ENCODE measurements at regions of chr10 and their contacts with region 1.

Region 1: GRCh38 chr10:125982260-125982948 is 86.0 kb downstream of the FANK1 start:
- DNase-seq: peak in 1 of 2 donors; percentile 71
- ATAC-seq: peak; percentile 66 to 89 (median 87)
- H3K4me3 ChIP-seq: no peak overlapping the region
- H3K4me3 Mint-ChIP-seq: no peak overlapping the region
- H3K27ac ChIP-seq: no peak overlapping the region
- H3K27ac Mint-ChIP-seq: peak overlapping the region; percentile 21 to 75
- H3K4me1 ChIP-seq: peaks cover 5% of the 10 kb centered on the region
- H3K4me1 Mint-ChIP-seq: peaks cover 33 to 43% of the 10 kb centered on the region in 2 donors
- H3K27me3 ChIP-seq: no peaks in the 10 kb centered on the region
- H3K27me3 Mint-ChIP-seq: peaks cover 3 to 14% of the 10 kb centered on the region in 2 donors
- CTCF ChIP-seq: peak; percentile 90

Region 2: GRCh38 chr10:126013489-126014281 is 31.3 kb after region 1 on chr10:
- intact Hi-C with region 1: loop called (anchors 1 kb)
- DNase-seq: peak; percentile 19 to 30
- ATAC-seq: peak in 2 of 3 donors; percentile 22 to 38
- H3K4me3 ChIP-seq: no peak overlapping the region
- H3K4me3 Mint-ChIP-seq: peak overlapping the region; percentile 33
- H3K27ac ChIP-seq: no peak overlapping the region
- H3K27ac Mint-ChIP-seq: peak overlapping the region; percentile 86 to 99
- H3K4me1 ChIP-seq: peaks cover 20% of the 10 kb centered on the region
- H3K4me1 Mint-ChIP-seq: peaks cover 32 to 61% of the 10 kb centered on the region in 2 donors
- H3K27me3 ChIP-seq: no peaks in the 10 kb centered on the region
- H3K27me3 Mint-ChIP-seq: no peaks in the 10 kb centered on the region
- CTCF ChIP-seq: peak; percentile 18

Region 3: GRCh38 chr10:126041781-126042231 is 59.4 kb after region 1 on chr10:
- intact Hi-C with region 1: loop called (anchors 2 kb)
- DNase-seq: peak; percentile 85 to 88
- ATAC-seq: peak; percentile 83 to 95 (median 92)
- H3K4me3 ChIP-seq: peak overlapping the region; percentile 23
- H3K4me3 Mint-ChIP-seq: peak overlapping the region; percentile 73
- H3K27ac ChIP-seq: peak overlapping the region; percentile 97
- H3K27ac Mint-ChIP-seq: peak overlapping the region; percentile 98 to 99
- H3K4me1 ChIP-seq: peaks cover 27% of the 10 kb centered on the region
- H3K4me1 Mint-ChIP-seq: peaks cover 20 to 28% of the 10 kb centered on the region in 2 donors
- H3K27me3 ChIP-seq: no peaks in the 10 kb centered on the region
- H3K27me3 Mint-ChIP-seq: no peaks in the 10 kb centered on the region
- CTCF ChIP-seq: no peak

Region 4: GRCh38 chr10:126097558-126098225 is 115.3 kb after region 1 on chr10:
- intact Hi-C with region 1: loop called (anchors 1 kb)
- DNase-seq: peak in 1 of 2 donors; percentile 15
- ATAC-seq: peak in 2 of 3 donors; percentile 46 to 61
- H3K4me3 ChIP-seq: no peak overlapping the region
- H3K4me3 Mint-ChIP-seq: no peak overlapping the region
- H3K27ac ChIP-seq: no peak overlapping the region
- H3K27ac Mint-ChIP-seq: no peak overlapping the region
- H3K4me1 ChIP-seq: no peaks in the 10 kb centered on the region
- H3K4me1 Mint-ChIP-seq: no peaks in the 10 kb centered on the region
- H3K27me3 ChIP-seq: peaks cover 2% of the 10 kb centered on the region
- H3K27me3 Mint-ChIP-seq: no peaks in the 10 kb centered on the region
- CTCF ChIP-seq: peak; percentile 43

Region 5: GRCh38 chr10:126171553-126171952 is 189.1 kb after region 1 on chr10:
- intact Hi-C with region 1: no loop called
- DNase-seq: no peak
- ATAC-seq: no peak
- H3K4me3 ChIP-seq: no peak overlapping the region
- H3K4me3 Mint-ChIP-seq: no peak overlapping the region
- H3K27ac ChIP-seq: no peak overlapping the region
- H3K27ac Mint-ChIP-seq: no peak overlapping the region
- H3K4me1 ChIP-seq: no peaks in the 10 kb centered on the region
- H3K4me1 Mint-ChIP-seq: no peaks in the 10 kb centered on the region
- H3K27me3 ChIP-seq: no peaks in the 10 kb centered on the region
- H3K27me3 Mint-ChIP-seq: peaks cover 6% of the 10 kb centered on the region in 2 donors
- CTCF ChIP-seq: no peak

Region 6: DNA sequence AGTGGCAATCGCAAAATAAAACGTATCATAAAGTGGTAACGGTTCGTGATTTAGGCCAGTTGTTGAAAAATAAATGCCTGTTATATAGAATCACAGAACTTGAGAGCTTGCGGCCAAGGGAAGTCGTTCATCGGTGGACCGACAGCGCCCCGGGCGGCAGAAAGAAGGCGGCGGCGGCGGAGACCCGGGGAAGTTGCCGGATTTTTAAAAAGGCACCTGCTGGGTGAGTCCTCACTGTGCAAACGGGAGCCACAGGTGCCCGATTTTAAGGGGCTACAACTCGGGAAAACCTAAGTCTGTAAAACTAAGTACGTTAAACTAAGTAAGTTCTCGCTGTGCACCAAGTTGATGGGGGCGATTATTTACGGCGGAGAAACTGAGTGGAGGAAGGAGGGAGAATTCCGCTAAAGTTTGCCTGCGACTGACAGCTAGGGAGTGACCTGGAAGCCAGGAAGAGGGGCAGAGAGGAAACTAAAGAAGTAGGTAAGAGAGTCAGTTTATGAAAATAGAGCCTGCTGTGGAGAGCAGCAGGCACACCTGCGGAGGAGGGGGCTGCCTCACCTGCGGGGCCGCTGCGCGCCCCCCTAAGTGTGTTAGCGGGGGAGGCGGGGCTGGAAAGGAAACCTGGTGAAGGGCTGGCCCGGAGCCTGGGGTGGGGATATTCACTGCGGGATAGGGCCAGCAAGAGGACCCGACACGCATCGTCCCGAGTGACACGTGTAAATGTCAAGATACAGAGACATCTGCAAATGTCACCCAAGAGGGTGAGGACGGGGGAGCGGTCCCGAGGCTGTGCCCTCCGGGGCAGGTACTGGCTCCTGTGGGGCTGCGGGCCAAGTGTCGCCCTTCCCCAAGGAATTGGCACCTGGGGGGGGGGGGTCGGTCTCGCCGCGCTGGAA is 404.9 kb after region 1 on chr10:
- intact Hi-C with region 1: loop called (anchors 10 kb)
- DNase-seq: peak in 1 of 2 donors; percentile 41
- ATAC-seq: peak in 1 of 3 donors; percentile 45
- H3K4me3 ChIP-seq: peak overlapping the region; percentile 12
- H3K4me3 Mint-ChIP-seq: peak overlapping the region; percentile 84
- H3K27ac ChIP-seq: no peak overlapping the region
- H3K27ac Mint-ChIP-seq: no peak overlapping the region
- H3K4me1 ChIP-seq: peaks cover 7% of the 10 kb centered on the region
- H3K4me1 Mint-ChIP-seq: peaks cover 7 to 9% of the 10 kb centered on the region in 2 donors
- H3K27me3 ChIP-seq: peaks cover 9% of the 10 kb centered on the region
- H3K27me3 Mint-ChIP-seq: peaks cover 50 to 72% of the 10 kb centered on the region in 2 donors
- CTCF ChIP-seq: peak; percentile 40

Region 7: GRCh38 chr10:126504063-126504739 is 521.8 kb after region 1 on chr10:
- intact Hi-C with region 1: loop called (anchors 2 kb)
- DNase-seq: peak in 1 of 2 donors; percentile 45
- ATAC-seq: peak in 1 of 3 donors; percentile 58
- H3K4me3 ChIP-seq: no peak overlapping the region
- H3K4me3 Mint-ChIP-seq: no peak overlapping the region
- H3K27ac ChIP-seq: no peak overlapping the region
- H3K27ac Mint-ChIP-seq: no peak overlapping the region
- H3K4me1 ChIP-seq: no peaks in the 10 kb centered on the region
- H3K4me1 Mint-ChIP-seq: peaks cover 0 to 5% of the 10 kb centered on the region in 2 donors
- H3K27me3 ChIP-seq: no peaks in the 10 kb centered on the region
- H3K27me3 Mint-ChIP-seq: peaks cover 4 to 6% of the 10 kb centered on the region in 2 donors
- CTCF ChIP-seq: peak; percentile 50

Region 8: DNA sequence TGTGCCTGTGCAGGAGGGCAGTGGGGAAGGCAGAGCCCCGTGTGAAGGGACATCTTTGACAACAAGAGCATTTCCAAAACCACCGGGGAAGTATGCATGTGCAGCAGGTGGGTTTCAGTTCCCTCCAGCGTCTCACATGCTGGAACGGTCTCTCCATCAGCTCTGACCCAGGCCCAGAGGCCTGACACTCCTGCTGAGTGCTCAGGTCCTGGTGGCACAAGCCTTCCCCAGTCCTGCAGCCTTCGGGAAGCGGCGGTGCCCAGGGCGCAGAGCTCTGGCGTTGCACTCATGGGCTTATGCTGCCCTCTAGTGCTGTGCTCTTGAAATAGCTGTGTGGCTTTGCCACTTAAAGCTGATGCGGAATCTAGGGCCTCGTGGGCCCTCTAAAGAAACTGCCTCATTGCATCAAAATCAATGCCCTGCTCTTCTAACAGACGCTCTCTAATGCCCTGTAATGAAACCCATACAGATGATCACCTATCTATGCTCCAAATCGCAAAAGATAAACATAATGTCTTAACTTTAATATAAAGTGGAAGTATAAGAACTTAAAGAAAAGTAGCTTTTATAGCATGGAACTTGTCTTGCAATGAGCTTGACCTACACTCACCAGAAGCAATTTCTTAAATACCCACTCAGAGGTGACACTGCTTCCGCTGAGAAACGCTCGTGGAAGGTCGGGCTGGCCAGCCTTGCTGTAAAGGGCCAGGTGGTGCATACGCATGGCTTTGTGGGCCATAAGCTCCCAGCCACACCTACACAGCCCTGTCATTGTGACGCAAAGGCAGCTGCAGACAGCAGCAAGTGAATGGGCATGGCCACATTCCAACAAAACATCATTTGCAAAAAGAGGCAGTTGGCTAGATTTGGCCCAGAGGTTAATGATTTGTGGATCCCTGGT is 1871.7 kb after region 1 on chr10:
- intact Hi-C with region 1: loop called (anchors 5 kb)
- DNase-seq: peak; percentile 42 to 71
- ATAC-seq: peak; percentile 78 to 92 (median 79)
- H3K4me3 ChIP-seq: no peak overlapping the region
- H3K4me3 Mint-ChIP-seq: no peak overlapping the region
- H3K27ac ChIP-seq: no peak overlapping the region
- H3K27ac Mint-ChIP-seq: no peak overlapping the region
- H3K4me1 ChIP-seq: peaks cover 22% of the 10 kb centered on the region
- H3K4me1 Mint-ChIP-seq: peaks cover 8% of the 10 kb centered on the region in 2 donors
- H3K27me3 ChIP-seq: peaks cover 3% of the 10 kb centered on the region
- H3K27me3 Mint-ChIP-seq: peaks cover 16% of the 10 kb centered on the region in 2 donors
- CTCF ChIP-seq: peak; percentile 78